Activated CD4-positive, alpha-beta memory T cell treated with anti-CD3 and anti-CD28 coated beads, Interleukin-2, amount 10 ng/mL, durations not matched to agents 7 days and 5 days (primary cell): ENCODE measurements at regions of chr11 and their contacts with region 1.

Region 1: GRCh38 chr11:123103326-123103980 is 41.5 kb upstream of the HSPA8 start:
- DNase-seq: peak; percentile 36
- H3K4me3 Mint-ChIP-seq: no peak overlapping the region
- H3K27ac Mint-ChIP-seq: no peak overlapping the region
- H3K4me1 Mint-ChIP-seq: peaks cover 14% of the 10 kb centered on the region
- H3K27me3 Mint-ChIP-seq: no peaks in the 10 kb centered on the region

Region 2: GRCh38 chr11:123062158-123062891 is 41.1 kb before region 1 on chr11:
- CTCF ChIA-PET with region 1: interaction called, 109 read pairs
- POLR2A ChIA-PET with region 1: interaction called, 51 read pairs
- DNase-seq: peak; percentile 99
- H3K4me3 Mint-ChIP-seq: peak overlapping the region; percentile 90
- H3K27ac Mint-ChIP-seq: peak overlapping the region; percentile 99
- H3K4me1 Mint-ChIP-seq: peaks cover 46% of the 10 kb centered on the region
- H3K27me3 Mint-ChIP-seq: no peaks in the 10 kb centered on the region

Region 3: GRCh38 chr11:123083623-123084029 is 19.8 kb before region 1 on chr11:
- CTCF ChIA-PET with region 1: interaction called, 18 read pairs
- POLR2A ChIA-PET with region 1: interaction called, 3 read pairs
- DNase-seq: peak; percentile 82
- H3K4me3 Mint-ChIP-seq: peak overlapping the region; percentile 59
- H3K27ac Mint-ChIP-seq: peak overlapping the region; percentile 76
- H3K4me1 Mint-ChIP-seq: peaks cover 57% of the 10 kb centered on the region
- H3K27me3 Mint-ChIP-seq: no peaks in the 10 kb centered on the region

Region 4: GRCh38 chr11:123235117-123235655 is 131.7 kb after region 1 on chr11:
- CTCF ChIA-PET with region 1: interaction called, 11 read pairs
- POLR2A ChIA-PET with region 1: no interaction called
- DNase-seq: peak; percentile 40
- H3K4me3 Mint-ChIP-seq: no peak overlapping the region
- H3K27ac Mint-ChIP-seq: no peak overlapping the region
- H3K4me1 Mint-ChIP-seq: peaks cover 35% of the 10 kb centered on the region
- H3K27me3 Mint-ChIP-seq: peaks cover 11% of the 10 kb centered on the region